GM12878 (cell line): ENCODE measurements at regions of chr21 and their contacts with region 1.

Region 1: DNA sequence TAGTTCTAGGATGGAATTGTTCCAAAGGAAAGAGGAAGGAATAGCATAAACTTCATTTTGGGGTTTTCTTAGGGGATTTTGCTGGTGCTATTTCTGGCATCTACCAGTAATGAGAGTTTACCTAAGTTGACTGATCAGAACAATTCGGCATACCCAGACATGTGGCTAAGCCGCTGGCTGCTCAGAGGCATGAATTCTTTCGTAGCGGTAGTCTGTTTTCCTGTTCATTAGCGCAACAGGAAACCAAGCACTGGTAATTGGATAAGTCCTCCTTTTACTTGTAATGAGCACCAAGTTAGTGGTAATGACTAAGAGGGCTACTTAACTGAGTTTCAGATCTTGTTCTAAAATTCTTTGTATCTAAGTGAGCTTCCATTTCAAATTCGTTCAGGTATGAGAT is 38.6 kb downstream of the C21orf91 start:
- DNase-seq: peak; percentile 95
- ATAC-seq: peak; percentile 64
- H3K4me3 ChIP-seq: no peak overlapping the region
- H3K27ac ChIP-seq: peak overlapping the region; percentile 91
- H3K4me1 ChIP-seq: peaks cover 65% of the 10 kb centered on the region
- H3K27me3 ChIP-seq: no peaks in the 10 kb centered on the region
- CTCF ChIP-seq: no peak
- EP300 ChIP-seq: peak; percentile 83 to 87
- POLR2A ChIP-seq: no peak
- RAD21 ChIP-seq: 0 out of 2 replicates have a peak, but pooled peaks have one; percentile 19

Region 2: GRCh38 chr21:17598437-17598836 is 182.1 kb before region 1 on chr21:
- CTCF ChIA-PET with region 1: no interaction called
- POLR2A ChIA-PET with region 1: no interaction called
- RAD21 ChIA-PET with region 1: no interaction called
- SMC1A ChIA-PET with region 1: no interaction called
- in situ Hi-C with region 1: no loop called
- intact Hi-C with region 1: no loop called
- DNase-seq: no peak
- ATAC-seq: peak; percentile 83
- H3K4me3 ChIP-seq: no peak overlapping the region
- H3K27ac ChIP-seq: no peak overlapping the region
- H3K4me1 ChIP-seq: peaks cover 5% of the 10 kb centered on the region; the same call in 1 of the 2 replicates
- H3K27me3 ChIP-seq: no peaks in the 10 kb centered on the region
- CTCF ChIP-seq: no peak
- EP300 ChIP-seq: no peak
- POLR2A ChIP-seq: no peak
- RAD21 ChIP-seq: no peak

Region 3: GRCh38 chr21:17611414-17612022 is 169.0 kb before region 1 on chr21:
- CTCF ChIA-PET with region 1: interaction called, 3 read pairs
- POLR2A ChIA-PET with region 1: interaction called, 4 read pairs
- RAD21 ChIA-PET with region 1: interaction called, 7 read pairs
- SMC1A ChIA-PET with region 1: no interaction called
- in situ Hi-C with region 1: loop called (anchors 5 kb)
- intact Hi-C with region 1: loop called (anchors 5 kb)
- DNase-seq: peak; percentile 59
- ATAC-seq: peak; percentile 68
- H3K4me3 ChIP-seq: peak overlapping the region; percentile 100
- H3K27ac ChIP-seq: peak overlapping the region; percentile 70
- H3K4me1 ChIP-seq: peaks cover 4% of the 10 kb centered on the region
- H3K27me3 ChIP-seq: no peaks in the 10 kb centered on the region
- CTCF ChIP-seq: no peak
- EP300 ChIP-seq: 0 out of 4 replicates have a peak, but pooled peaks have one; percentile 13 to 20
- POLR2A ChIP-seq: 0 out of 2 replicates have a peak, but pooled peaks have one; percentile 48
- RAD21 ChIP-seq: no peak

Region 4: GRCh38 chr21:17699524-17700189 is 80.9 kb before region 1 on chr21:
- CTCF ChIA-PET with region 1: interaction called, 3 read pairs
- POLR2A ChIA-PET with region 1: no interaction called
- RAD21 ChIA-PET with region 1: interaction called, 5 read pairs
- SMC1A ChIA-PET with region 1: interaction called, 3 read pairs
- in situ Hi-C with region 1: no loop called
- intact Hi-C with region 1: loop called (anchors 2 kb)
- DNase-seq: peak; percentile 74
- ATAC-seq: peak; percentile 94
- H3K4me3 ChIP-seq: no peak overlapping the region
- H3K27ac ChIP-seq: no peak overlapping the region
- H3K4me1 ChIP-seq: peaks cover 9% of the 10 kb centered on the region
- H3K27me3 ChIP-seq: no peaks in the 10 kb centered on the region
- CTCF ChIP-seq: no peak
- EP300 ChIP-seq: 0 out of 4 replicates have a peak, but pooled peaks of 1 of the 2 experiments have one; percentile 25
- POLR2A ChIP-seq: no peak
- RAD21 ChIP-seq: no peak

Region 5: GRCh38 chr21:17741806-17742550 is 38.6 kb before region 1 on chr21:
- CTCF ChIA-PET with region 1: interaction called, 4 read pairs
- POLR2A ChIA-PET with region 1: no interaction called
- RAD21 ChIA-PET with region 1: interaction called, 3 read pairs
- SMC1A ChIA-PET with region 1: interaction called, 6 read pairs
- in situ Hi-C with region 1: no loop called
- intact Hi-C with region 1: loop called (anchors 2 kb)
- DNase-seq: no peak
- ATAC-seq: no peak
- H3K4me3 ChIP-seq: no peak overlapping the region
- H3K27ac ChIP-seq: no peak overlapping the region
- H3K4me1 ChIP-seq: peaks cover 4% of the 10 kb centered on the region; the same call in 1 of the 2 replicates
- H3K27me3 ChIP-seq: no peaks in the 10 kb centered on the region
- CTCF ChIP-seq: no peak
- EP300 ChIP-seq: no peak
- POLR2A ChIP-seq: no peak
- RAD21 ChIP-seq: no peak

Region 6: GRCh38 chr21:17802572-17802971 is 22.0 kb after region 1 on chr21:
- CTCF ChIA-PET with region 1: interaction called, 3 read pairs
- POLR2A ChIA-PET with region 1: interaction called, 3 read pairs
- RAD21 ChIA-PET with region 1: interaction called, 17 read pairs
- SMC1A ChIA-PET with region 1: interaction called, 13 read pairs
- in situ Hi-C with region 1: no loop called
- intact Hi-C with region 1: no loop called
- DNase-seq: no peak
- ATAC-seq: no peak
- H3K4me3 ChIP-seq: no peak overlapping the region
- H3K27ac ChIP-seq: no peak overlapping the region
- H3K4me1 ChIP-seq: no peaks in the 10 kb centered on the region
- H3K27me3 ChIP-seq: no peaks in the 10 kb centered on the region
- CTCF ChIP-seq: no peak
- EP300 ChIP-seq: no peak
- POLR2A ChIP-seq: no peak
- RAD21 ChIP-seq: no peak

Region 7: DNA sequence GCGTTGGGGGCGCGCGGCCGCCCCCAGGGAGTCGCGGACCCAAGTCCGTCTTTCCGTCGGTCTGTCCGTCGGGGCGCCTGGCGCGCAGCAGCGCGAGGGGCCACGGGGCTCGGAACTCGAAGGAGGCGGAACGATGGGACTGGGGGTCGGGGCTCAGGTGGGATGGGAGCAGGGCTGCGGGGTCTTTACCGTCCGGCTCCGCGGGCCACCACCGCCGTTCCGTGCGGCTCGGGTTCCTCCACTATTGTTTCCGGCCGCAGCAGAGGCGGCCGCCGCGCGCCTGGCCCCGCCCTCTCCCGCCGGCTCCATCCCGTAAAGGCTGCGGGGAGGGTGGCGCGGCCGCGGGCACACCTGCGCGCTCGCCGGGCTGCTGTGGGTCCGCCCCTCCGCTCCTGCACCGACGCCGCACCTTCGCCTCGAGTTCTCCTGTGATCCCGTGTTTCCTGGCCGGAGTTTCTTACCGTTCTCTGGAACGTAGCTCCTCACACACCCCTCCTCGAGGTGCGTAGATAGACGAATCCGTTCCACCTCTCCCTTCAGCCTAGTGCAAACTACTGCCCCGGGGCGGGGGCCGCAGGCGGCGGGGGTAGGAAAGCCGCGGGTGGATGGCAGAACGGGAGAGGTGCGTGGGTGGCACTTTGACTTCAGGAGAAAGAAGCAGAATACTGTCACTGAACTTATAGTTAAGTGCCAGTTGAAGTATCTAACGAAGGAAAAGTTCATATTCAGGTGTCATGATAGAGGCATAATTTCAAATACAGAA is 38.8 kb after region 1 on chr21 and contains the start of gene C21orf91:
- CTCF ChIA-PET with region 1: interaction called, 48 read pairs
- POLR2A ChIA-PET with region 1: interaction called, 13 read pairs
- RAD21 ChIA-PET with region 1: interaction called, 72 read pairs
- SMC1A ChIA-PET with region 1: interaction called, 100 read pairs
- in situ Hi-C with region 1: no loop called
- intact Hi-C with region 1: loop called (anchors 1 kb)
- DNase-seq: peak; percentile 79
- ATAC-seq: peak; percentile 89
- H3K4me3 ChIP-seq: peak within 1 kb of the TSS; percentile 92
- H3K27ac ChIP-seq: peak within 1 kb of the TSS; percentile 98
- H3K4me1 ChIP-seq: peaks cover 12% of the 10 kb centered on the region
- H3K27me3 ChIP-seq: no peaks in the 10 kb centered on the region
- CTCF ChIP-seq: no peak
- EP300 ChIP-seq: peak in 1 of 2 experiments; percentile 67; a peak in 2 of 4 replicates
- POLR2A ChIP-seq: peak; percentile 96
- RAD21 ChIP-seq: no peak
- polyA plus RNA-seq, gene C21orf91: 9.3 to 14.4 TPM

Region 8: GRCh38 chr21:17903029-17903806 is 122.7 kb after region 1 on chr21:
- CTCF ChIA-PET with region 1: interaction called, 3 read pairs
- POLR2A ChIA-PET with region 1: no interaction called
- RAD21 ChIA-PET with region 1: no interaction called
- SMC1A ChIA-PET with region 1: interaction called, 6 read pairs
- in situ Hi-C with region 1: no loop called
- intact Hi-C with region 1: loop called (anchors 5 kb)
- DNase-seq: no peak
- ATAC-seq: peak; percentile 68
- H3K4me3 ChIP-seq: no peak overlapping the region
- H3K27ac ChIP-seq: no peak overlapping the region
- H3K4me1 ChIP-seq: peaks cover 3% of the 10 kb centered on the region
- H3K27me3 ChIP-seq: no peaks in the 10 kb centered on the region
- CTCF ChIP-seq: peak in 1 of 3 experiments; percentile 40; a peak in 1 of 6 replicates
- EP300 ChIP-seq: no peak
- POLR2A ChIP-seq: no peak
- RAD21 ChIP-seq: peak; percentile 49; the same call in 1 of the 2 replicates

Region 9: GRCh38 chr21:18058731-18059398 is 278.3 kb after region 1 on chr21:
- CTCF ChIA-PET with region 1: no interaction called
- POLR2A ChIA-PET with region 1: no interaction called
- RAD21 ChIA-PET with region 1: no interaction called
- SMC1A ChIA-PET with region 1: no interaction called
- in situ Hi-C with region 1: no loop called
- intact Hi-C with region 1: no loop called
- DNase-seq: no peak
- ATAC-seq: no peak
- H3K4me3 ChIP-seq: no peak overlapping the region
- H3K27ac ChIP-seq: no peak overlapping the region
- H3K4me1 ChIP-seq: no peaks in the 10 kb centered on the region
- H3K27me3 ChIP-seq: no peaks in the 10 kb centered on the region
- CTCF ChIP-seq: no peak
- EP300 ChIP-seq: no peak
- POLR2A ChIP-seq: no peak
- RAD21 ChIP-seq: no peak